ENCODE measurements at regions of chr17 and their contacts with region 1.

Region 1: GRCh38 chr17:32877164-32877764 is 340 bp upstream of the MYO1D start:
- DNase-seq: peak; percentile 99
- H3K4me3 Mint-ChIP-seq: peak overlapping the region; percentile 72
- H3K27ac Mint-ChIP-seq: peak overlapping the region; percentile 60
- H3K4me1 Mint-ChIP-seq: peaks cover 21% of the 10 kb centered on the region
- H3K27me3 Mint-ChIP-seq: peaks cover 41% of the 10 kb centered on the region

Region 2: DNA sequence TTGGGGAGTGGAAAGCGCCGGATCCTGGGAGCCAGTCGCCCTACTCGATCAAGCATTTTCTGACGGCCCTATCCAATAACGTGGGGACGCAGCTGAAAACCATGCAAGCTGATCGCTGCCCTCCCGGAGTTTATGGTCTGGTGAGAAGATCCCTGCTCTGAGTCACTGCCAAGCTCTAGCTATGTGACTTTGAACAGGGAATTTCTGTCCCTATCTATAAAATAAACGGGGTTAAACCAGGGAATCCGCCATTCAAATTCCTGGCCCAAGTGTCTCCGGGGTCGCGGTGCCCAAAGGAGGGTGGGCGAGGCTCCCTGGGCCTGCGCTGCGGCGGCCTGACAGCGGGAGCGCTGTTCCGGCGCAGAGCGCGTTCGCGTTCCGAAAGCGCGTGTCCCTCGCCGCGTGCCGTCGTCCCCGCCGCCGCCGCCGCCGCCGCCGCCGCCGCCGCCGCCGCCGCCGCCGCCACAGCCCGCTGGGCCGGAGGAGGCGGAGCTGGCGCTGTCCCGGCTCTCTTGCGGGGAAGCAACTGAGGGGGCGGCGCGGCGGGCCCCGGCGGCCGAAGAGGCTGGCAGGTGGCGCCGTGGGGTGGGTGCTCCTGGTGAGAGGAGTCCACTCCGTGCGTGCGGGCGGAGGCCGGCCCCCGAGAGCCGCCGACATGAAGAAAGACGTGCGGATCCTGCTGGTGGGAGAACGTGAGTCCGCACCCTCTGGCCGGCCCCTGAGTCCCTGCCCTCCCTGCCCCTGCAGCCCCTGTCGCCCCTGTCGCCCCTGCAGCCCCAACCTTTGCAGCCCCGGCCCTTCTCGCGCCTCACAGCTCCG is 735.0 kb before region 1 on chr17 and contains the start of gene RHOT1:
- intact Hi-C with region 1: loop called (anchors 10 kb)
- DNase-seq: peak; percentile 94
- H3K4me3 Mint-ChIP-seq: peak within 1 kb of the TSS; percentile 96
- H3K27ac Mint-ChIP-seq: peak within 1 kb of the TSS; percentile 84
- H3K4me1 Mint-ChIP-seq: peaks cover 27% of the 10 kb centered on the region
- H3K27me3 Mint-ChIP-seq: no peaks in the 10 kb centered on the region
- total RNA-seq, gene RHOT1: 26.7 and 27.8 TPM in 2 replicates

Region 3: DNA sequence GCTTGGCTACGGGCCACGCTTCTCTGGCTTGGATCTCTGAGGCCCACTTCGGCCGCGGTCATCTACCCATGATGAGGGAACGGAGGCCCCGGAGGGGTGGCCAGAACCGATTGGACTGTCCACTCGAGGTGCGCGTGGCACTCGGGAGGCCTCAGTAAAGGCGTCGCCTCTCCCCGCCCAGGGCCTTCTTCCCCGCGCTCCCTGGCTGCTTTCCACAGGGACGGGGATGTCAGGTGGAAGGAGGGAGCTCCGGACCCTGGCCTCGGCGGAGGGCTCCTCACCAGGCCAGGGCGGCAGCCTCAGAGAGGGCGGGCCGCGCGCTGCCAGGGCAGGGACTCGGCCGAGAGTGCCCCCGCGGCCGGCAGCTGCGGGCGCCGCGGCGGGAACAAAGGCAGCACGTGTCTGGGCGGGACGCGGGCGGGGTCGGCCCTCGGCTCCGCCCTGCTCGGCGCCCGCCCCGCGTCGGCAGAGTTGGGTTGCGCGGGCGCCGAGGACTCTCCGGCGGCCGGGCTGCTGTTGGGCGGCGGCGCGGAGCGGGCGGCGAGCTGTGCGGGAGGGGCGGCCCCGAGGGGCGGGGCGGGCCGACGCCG is 391.1 kb before region 1 on chr17:
- intact Hi-C with region 1: loop called (anchors 1 kb)
- DNase-seq: peak; percentile 92
- H3K4me3 Mint-ChIP-seq: peak overlapping the region; percentile 66
- H3K27ac Mint-ChIP-seq: peak overlapping the region; percentile 40
- H3K4me1 Mint-ChIP-seq: peaks cover 27% of the 10 kb centered on the region
- H3K27me3 Mint-ChIP-seq: no peaks in the 10 kb centered on the region

Region 4: DNA sequence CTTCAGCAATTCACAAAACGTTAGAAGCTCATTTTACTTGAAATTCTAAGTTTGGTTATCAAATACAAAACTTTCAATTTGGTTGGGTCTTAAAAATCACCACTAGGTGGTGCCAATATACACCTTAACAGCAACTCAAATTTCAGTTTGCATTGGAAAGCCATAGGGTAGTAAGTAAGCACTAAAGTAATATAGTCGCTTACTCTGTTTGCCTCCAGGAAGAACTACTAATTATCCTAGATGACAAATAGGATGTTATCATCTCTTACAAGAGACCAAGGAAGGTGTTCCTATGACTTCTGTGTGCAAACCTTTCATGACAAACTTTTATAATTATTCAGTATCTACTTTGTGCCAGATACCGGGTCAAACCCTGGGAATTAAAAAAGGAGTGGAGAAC is 93.7 kb before region 1 on chr17:
- intact Hi-C with region 1: loop called (anchors 2 kb)
- DNase-seq: peak; percentile 67
- H3K4me3 Mint-ChIP-seq: no peak overlapping the region
- H3K27ac Mint-ChIP-seq: no peak overlapping the region
- H3K4me1 Mint-ChIP-seq: no peaks in the 10 kb centered on the region
- H3K27me3 Mint-ChIP-seq: peaks cover 21% of the 10 kb centered on the region

Region 5: GRCh38 chr17:32915245-32915644 is 38.0 kb after region 1 on chr17:
- intact Hi-C with region 1: loop called (anchors 2 kb)
- DNase-seq: no peak
- H3K4me3 Mint-ChIP-seq: no peak overlapping the region
- H3K27ac Mint-ChIP-seq: no peak overlapping the region
- H3K4me1 Mint-ChIP-seq: peaks cover 37% of the 10 kb centered on the region
- H3K27me3 Mint-ChIP-seq: peaks cover 10% of the 10 kb centered on the region